Activated T-helper 1 cell treated with anti-CD3 and anti-CD28 coated beads, Interleukin-12 subunit alpha, Interleukin-12 subunit beta, Interleukin-2, Interleukin-4 antibody, amounts not matched to agents 30 ng/mL and 10 ng/mL and 1 ng/mL, durations not matched to agents 14 hours and 24 hours and 36 hours (primary cell): ENCODE measurements at regions of chr1 and their contacts with region 1.

Region 1: DNA sequence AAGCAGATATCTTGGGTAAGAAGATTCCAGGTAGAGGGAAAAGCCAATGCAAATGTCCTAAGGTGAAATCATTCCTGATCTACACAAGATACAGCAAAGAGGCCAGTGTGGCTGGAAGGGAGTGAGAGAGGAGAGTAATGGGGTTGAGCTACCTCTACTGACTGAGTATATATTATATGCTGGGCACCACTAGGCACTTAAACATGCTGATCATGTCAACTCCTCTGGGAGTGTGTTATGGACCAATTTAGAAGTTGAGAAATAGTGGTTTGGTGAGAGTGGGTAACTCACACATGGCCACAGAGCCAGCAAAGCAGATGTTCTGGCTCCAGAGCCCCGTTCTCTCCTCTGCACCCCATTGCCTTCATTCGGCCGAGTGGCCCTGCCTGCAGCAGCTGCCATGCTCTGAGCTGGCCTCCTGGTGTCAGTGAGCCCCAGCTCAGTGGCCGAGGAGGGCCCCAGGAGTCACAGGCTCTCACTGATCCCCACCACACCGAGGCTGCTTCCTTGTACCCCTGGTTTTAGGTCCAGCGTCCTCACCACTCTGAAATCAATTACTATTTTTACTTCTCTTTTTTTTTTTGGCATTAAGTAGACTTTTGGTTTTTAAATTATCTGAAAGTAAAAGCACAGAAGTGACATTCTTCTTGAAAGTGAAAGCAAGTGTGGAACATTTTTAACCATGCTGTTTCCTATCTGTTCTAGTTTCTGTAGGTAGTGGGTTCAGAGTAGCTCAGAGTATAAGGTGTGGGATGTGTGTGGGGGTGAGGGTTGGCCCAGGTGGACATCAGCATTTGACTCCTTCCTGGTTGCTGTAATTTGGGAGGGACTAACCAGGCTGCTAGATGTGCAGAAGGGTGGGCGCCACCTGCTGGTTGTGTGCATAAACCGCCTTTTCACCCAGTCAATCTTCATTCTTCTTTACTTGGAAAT is 45.8 kb upstream of the CRNN start:
- DNase-seq: peak; percentile 46
- H3K4me3 Mint-ChIP-seq: peak overlapping the region; percentile 32
- H3K27ac Mint-ChIP-seq: peak overlapping the region; percentile 66
- H3K4me1 Mint-ChIP-seq: peaks cover 32% of the 10 kb centered on the region
- H3K27me3 Mint-ChIP-seq: peaks cover 8% of the 10 kb centered on the region

Region 2: DNA sequence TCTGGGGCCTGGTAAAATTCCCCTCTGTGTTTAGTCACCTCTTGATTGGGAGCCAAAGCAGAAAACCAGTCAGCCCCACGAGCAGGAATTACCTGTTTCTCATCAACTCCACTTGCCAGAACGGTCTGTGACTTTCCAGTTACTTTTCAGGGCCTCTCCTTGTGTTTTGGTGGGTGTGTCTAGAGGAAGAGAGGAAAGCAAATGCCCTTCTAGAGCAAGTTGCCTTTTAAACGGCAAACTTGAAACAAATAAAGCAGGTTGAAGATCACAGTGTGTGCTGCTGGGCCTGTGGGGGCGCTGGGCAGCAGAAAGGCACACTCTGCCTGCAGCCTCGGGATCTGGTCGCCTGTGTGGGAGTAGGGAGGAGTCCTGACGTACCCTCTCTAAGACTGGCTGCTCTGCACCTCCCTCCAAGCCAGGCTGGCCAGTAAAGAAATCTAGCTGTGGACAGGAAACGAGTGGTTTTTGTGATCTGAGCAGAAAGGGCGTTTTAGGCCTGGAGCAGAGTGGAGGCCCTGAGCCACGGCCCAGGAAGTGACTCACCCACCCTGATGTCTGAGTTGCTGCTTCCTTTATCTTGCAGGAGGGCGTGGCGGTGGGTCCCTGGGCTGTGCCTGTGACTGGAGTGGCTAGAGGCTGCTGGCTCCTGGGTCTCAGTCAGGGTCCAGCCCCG is 412.0 kb before region 1 on chr1:
- intact Hi-C with region 1: loop called (anchors 1 kb)
- DNase-seq: peak; percentile 83
- H3K4me3 Mint-ChIP-seq: peak overlapping the region; percentile 80
- H3K27ac Mint-ChIP-seq: peak overlapping the region; percentile 96
- H3K4me1 Mint-ChIP-seq: peaks cover 40% of the 10 kb centered on the region
- H3K27me3 Mint-ChIP-seq: peaks cover 3% of the 10 kb centered on the region

Region 3: DNA sequence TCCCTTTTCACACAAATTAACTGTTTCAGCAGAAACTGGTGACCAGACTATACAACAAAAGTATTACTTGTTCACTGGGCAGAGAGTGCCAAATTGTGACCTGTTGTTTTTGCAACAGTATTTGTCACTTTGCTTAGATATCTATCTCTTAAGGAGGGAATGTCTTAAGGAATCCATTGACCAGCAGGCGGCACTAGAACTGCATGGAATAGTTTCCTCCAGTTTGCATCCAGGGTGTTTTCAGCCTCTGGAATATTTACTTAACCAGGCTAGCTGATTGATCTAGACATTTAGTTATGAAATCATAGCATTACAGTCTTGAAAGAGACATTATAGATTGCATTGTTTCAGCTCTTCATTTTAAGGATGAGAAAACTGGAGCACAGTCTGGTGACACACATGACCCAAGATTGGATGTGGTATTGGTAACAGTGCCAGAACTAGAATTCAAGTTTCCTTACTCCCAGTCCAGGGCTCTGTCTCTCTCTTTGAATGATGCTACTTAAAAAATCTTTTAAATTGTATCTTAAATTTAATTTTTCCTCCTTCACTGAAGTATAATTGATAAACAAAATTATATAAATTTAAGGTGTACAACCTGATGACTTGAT is 317.8 kb before region 1 on chr1:
- intact Hi-C with region 1: loop called (anchors 2 kb)
- DNase-seq: no peak
- H3K4me3 Mint-ChIP-seq: no peak overlapping the region
- H3K27ac Mint-ChIP-seq: no peak overlapping the region
- H3K4me1 Mint-ChIP-seq: no peaks in the 10 kb centered on the region
- H3K27me3 Mint-ChIP-seq: peaks cover 18% of the 10 kb centered on the region

Region 4: DNA sequence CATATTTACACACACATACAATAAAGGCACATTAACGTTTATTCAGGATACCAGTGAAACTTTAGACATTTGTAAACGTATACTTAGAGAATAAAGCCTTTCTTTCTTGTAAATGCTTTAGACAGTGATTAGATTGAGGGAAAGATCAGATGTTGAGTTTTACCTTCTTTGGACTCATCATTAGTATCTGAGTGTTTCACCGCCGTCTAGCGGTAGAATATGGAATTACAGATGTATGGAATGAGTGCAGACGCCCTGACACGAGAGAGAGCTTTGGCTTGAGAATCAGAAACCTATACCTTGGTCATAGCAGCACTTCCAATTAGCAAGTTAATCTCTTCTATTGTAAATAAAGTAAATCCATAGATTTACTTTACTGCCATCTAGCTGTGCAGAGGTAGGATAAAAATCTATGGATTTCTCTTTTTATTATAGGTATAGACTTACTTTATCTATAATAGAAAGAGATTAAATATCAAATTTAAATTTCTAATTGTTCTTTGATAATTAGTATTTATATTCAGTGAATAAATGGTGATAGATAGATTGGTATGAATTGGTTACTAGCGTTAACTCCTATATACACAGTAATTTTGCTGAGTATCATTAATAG is 112.6 kb before region 1 on chr1:
- intact Hi-C with region 1: loop called (anchors 1 kb)
- DNase-seq: peak; percentile 21
- H3K4me3 Mint-ChIP-seq: no peak overlapping the region
- H3K27ac Mint-ChIP-seq: no peak overlapping the region
- H3K4me1 Mint-ChIP-seq: no peaks in the 10 kb centered on the region
- H3K27me3 Mint-ChIP-seq: peaks cover 18% of the 10 kb centered on the region

Region 5: GRCh38 chr1:152367434-152367833 is 92.4 kb before region 1 on chr1:
- intact Hi-C with region 1: no loop called
- DNase-seq: no peak
- H3K4me3 Mint-ChIP-seq: no peak overlapping the region
- H3K27ac Mint-ChIP-seq: no peak overlapping the region
- H3K4me1 Mint-ChIP-seq: no peaks in the 10 kb centered on the region
- H3K27me3 Mint-ChIP-seq: peaks cover 2% of the 10 kb centered on the region

Region 6: GRCh38 chr1:152386940-152387339 is 72.9 kb before region 1 on chr1:
- intact Hi-C with region 1: no loop called
- DNase-seq: no peak
- H3K4me3 Mint-ChIP-seq: no peak overlapping the region
- H3K27ac Mint-ChIP-seq: no peak overlapping the region
- H3K4me1 Mint-ChIP-seq: no peaks in the 10 kb centered on the region
- H3K27me3 Mint-ChIP-seq: peaks cover 7% of the 10 kb centered on the region

Region 7: DNA sequence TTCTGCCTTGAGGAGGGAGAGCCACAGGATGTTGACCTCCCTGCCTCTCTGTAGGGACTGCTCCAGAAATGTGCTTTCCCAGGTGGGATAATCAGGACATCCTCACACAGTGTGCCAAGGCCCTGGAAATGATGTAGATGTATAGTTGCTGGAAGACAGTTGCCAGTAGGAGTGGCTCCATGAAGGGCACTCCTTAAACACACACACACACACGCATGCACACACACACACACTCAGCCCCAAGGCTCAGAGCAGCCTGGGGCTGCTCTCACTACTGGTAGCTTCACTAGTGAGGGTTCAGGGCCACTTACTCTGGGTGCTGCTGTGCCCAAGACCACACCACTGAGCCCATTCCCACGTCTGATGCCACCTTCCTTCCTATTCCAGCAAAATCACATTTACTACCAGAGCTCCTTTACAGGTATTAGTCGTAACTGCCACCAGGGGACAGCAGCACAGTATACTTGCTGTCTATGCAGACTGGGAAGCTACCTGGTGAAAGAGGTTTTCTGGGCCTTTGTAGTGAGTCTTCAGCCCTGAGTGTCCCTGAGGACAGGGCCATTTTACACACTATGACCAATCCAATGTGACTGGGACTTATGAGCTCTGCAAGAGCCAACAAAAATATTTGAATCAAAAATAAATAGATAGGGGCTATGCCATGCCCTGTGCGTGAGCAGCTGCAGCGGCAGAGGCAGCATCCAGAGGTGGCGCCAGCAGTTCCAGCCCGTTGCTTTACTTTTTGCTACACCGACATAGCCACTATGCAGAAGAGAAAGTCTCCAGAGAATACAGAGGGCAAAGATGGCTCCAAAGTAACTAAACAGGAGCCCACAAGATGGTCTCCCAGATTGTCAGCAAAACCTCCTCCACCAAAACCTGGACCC is 60.8 kb before region 1 on chr1:
- intact Hi-C with region 1: loop called (anchors 1 kb)
- DNase-seq: no peak
- H3K4me3 Mint-ChIP-seq: no peak overlapping the region
- H3K27ac Mint-ChIP-seq: no peak overlapping the region
- H3K4me1 Mint-ChIP-seq: no peaks in the 10 kb centered on the region
- H3K27me3 Mint-ChIP-seq: peaks cover 15% of the 10 kb centered on the region

Region 8: DNA sequence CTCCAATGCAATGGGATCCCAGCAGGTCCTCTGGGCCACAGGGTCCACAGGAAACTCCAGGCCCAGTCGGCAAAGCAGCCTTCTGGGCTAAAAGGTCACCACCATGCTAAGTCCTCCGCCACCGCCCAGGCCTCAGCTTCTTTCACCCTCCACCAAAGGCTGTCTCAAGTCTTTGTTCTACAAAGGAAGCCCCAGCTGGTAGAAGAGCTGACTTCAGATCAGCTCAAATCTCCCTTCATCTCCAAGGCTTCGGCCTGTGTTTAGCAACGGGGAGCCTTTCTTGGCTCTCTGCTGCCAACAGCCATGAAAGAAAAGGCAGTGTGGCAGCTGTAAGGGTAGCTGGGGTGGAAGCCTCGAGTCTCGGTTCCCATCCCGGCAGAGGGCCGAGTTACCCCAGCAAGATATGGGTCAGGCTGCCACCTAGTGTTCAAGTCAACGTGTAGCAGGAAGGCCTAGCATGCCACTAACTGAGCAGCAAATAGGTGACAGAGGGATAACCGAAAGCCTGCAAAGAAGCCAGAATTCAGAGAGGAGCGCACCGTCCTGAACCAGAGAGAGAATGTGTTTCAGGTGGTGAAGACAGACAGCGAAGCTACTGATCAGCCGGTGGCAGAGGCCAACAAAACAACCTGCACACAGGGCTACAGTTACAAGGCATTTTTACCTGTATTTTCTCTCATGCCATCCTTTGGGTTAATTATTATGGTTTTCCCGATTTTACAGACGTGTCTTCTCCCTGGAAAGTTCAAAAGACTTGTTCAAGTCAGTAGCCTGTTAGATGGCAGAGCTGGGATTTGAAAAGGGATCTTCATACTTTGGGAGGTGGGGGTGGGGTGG is 19.0 kb before region 1 on chr1:
- intact Hi-C with region 1: loop called (anchors 1 kb)
- DNase-seq: peak; percentile 36
- H3K4me3 Mint-ChIP-seq: no peak overlapping the region
- H3K27ac Mint-ChIP-seq: no peak overlapping the region
- H3K4me1 Mint-ChIP-seq: peaks cover 4% of the 10 kb centered on the region
- H3K27me3 Mint-ChIP-seq: peaks cover 20% of the 10 kb centered on the region

Region 9: DNA sequence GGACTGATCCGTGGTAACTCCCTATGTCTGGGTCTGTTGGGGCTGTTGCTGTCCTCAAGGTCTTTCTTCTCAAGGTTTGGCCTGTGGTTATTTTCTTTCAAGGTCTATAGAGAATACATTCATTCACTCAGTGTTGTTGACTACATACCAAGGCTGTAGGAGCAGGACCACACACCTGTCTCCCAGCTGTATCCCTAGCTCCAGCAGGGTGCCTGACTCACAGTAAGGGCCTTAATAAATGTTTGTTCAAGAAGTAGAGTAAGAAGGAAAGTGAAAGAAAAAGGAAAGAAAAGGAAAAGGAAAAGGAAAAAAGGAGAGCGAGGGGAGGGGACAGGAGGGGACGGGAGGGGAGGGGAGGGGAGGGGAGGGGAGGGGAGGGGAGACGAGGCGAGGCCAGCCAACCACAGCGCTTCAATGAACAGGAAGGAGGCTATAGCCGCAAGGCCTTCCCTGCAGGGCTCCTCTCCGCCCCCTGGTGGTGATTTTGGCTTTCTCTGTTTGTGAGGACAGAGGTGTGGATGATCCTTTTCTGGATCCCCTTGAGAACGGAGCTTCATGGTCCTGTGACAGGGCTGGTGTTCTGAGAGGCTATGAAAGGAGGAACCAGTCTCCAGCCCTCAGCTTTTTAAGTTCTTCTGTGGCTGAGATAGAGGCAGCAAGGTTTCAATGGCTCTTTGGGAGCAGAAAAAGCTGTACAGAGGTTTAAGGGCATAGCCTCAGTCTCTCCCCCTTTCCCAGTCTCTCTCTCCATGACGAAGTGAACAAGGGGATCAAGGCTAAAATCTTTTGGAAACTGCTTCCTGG is 20.1 kb after region 1 on chr1:
- intact Hi-C with region 1: loop called (anchors 1 kb)
- DNase-seq: peak; percentile 11
- H3K4me3 Mint-ChIP-seq: no peak overlapping the region
- H3K27ac Mint-ChIP-seq: no peak overlapping the region
- H3K4me1 Mint-ChIP-seq: no peaks in the 10 kb centered on the region
- H3K27me3 Mint-ChIP-seq: peaks cover 3% of the 10 kb centered on the region